Activated CD4-positive, alpha-beta T cell treated with anti-CD3 and anti-CD28 coated beads, Interleukin-2, amount 10 ng/mL, durations not matched to agents 24 days and 14 days (primary cell): ENCODE measurements at regions of chr3 and their contacts with region 1.

Region 1: GRCh38 chr3:156605686-156606605 is 51.0 kb upstream of the SSR3 start:
- DNase-seq: no peak
- H3K4me3 Mint-ChIP-seq: peak overlapping the region; percentile 86
- H3K27ac Mint-ChIP-seq: no peak overlapping the region
- H3K4me1 Mint-ChIP-seq: peaks cover 33% of the 10 kb centered on the region
- H3K27me3 Mint-ChIP-seq: peaks cover 22% of the 10 kb centered on the region

Region 2: GRCh38 chr3:156554842-156555687 is 50.9 kb before region 1 on chr3 and contains the start of gene SSR3:
- intact Hi-C with region 1: loop called (anchors 2 kb)
- DNase-seq: peak; percentile 100
- H3K4me3 Mint-ChIP-seq: peak within 1 kb of the TSS; percentile 97
- H3K27ac Mint-ChIP-seq: peak within 1 kb of the TSS; percentile 96
- H3K4me1 Mint-ChIP-seq: peaks cover 48% of the 10 kb centered on the region
- H3K27me3 Mint-ChIP-seq: no peaks in the 10 kb centered on the region
- total RNA-seq, gene SSR3: 151 and 153 TPM in 2 replicates

Region 3: GRCh38 chr3:156664831-156665178 is 58.9 kb after region 1 on chr3:
- intact Hi-C with region 1: loop called (anchors 2 kb)
- DNase-seq: no peak
- H3K4me3 Mint-ChIP-seq: peak overlapping the region; percentile 63
- H3K27ac Mint-ChIP-seq: peak overlapping the region; percentile 77
- H3K4me1 Mint-ChIP-seq: peaks cover 64% of the 10 kb centered on the region
- H3K27me3 Mint-ChIP-seq: no peaks in the 10 kb centered on the region